ENCODE measurements at regions of chr2 and their contacts with region 1.

Region 1: DNA sequence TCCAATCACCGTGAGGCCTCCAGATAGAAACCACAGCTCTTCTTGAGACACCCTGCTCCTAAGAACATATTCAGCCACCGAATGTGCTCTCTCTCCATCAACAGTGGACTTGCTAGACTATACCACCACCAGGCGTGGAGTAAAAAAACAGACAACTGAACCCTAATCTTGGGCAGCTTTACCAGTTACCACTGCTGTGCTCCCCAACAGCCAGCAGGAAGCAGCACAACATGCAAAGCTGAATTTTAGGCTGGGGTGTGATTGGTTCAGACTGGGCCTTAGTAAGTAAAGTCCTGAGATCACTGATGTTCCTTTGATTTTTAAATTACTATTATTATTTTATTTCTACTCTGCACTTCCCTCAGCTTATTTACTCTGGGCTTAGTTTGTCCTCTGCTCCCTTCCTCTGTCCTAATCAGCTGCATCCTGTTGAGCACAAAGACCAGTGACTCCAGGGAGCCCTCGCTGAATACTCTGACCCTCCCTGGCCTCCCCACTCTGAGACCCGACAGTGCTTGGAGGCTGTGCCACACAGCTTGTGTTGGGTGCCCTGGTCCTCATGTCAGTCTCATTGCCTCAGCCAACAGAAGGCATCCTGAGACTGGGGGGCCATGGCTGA is 21.9 kb downstream of the MRPL35 start:
- DNase-seq: peak; percentile 71
- H3K4me3 Mint-ChIP-seq: no peak overlapping the region
- H3K27ac Mint-ChIP-seq: no peak overlapping the region
- H3K4me1 Mint-ChIP-seq: peaks cover 9% of the 10 kb centered on the region
- H3K27me3 Mint-ChIP-seq: no peaks in the 10 kb centered on the region
- CTCF ChIP-seq: peak; percentile 90

Region 2: GRCh38 chr2:86201671-86202335 is 19.4 kb before region 1 on chr2:
- CTCF ChIA-PET with region 1: interaction called, 15 read pairs
- POLR2A ChIA-PET with region 1: interaction called, 9 read pairs
- intact Hi-C with region 1: no loop called
- DNase-seq: no peak
- H3K4me3 Mint-ChIP-seq: no peak overlapping the region
- H3K27ac Mint-ChIP-seq: no peak overlapping the region
- H3K4me1 Mint-ChIP-seq: peaks cover 16% of the 10 kb centered on the region
- H3K27me3 Mint-ChIP-seq: no peaks in the 10 kb centered on the region
- CTCF ChIP-seq: no peak

Region 3: DNA sequence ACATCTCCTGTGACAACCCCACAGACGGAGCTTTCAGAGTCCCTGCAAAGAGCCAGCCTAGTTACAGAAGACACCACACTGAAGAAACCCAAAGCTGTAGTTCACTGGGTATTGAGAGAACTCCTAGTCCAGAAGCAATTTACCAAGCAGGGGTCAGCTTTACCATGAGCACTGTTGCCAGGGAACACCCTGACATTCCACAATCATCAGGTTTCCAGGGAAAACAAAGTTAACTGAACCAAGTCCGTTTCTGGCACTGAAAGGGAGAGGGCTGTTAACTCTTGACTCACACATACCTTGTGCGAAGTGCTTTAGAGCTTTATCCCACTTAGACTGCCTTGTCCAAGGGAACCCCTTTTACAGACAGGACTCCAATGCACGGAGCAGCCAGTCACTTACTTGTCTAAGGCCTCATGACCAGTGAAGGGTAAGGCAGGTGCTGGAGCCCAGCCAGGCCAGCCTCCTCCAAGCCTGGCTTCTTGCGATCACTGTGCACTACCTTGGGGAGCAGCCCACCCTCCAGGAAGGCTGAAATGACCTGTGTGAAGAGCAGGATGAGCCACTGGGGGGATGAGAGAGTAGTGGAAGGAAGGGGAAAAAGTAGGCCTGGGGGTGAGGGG is 62.3 kb after region 1 on chr2:
- CTCF ChIA-PET with region 1: no interaction called
- POLR2A ChIA-PET with region 1: no interaction called
- intact Hi-C with region 1: no loop called
- DNase-seq: no peak
- H3K4me3 Mint-ChIP-seq: no peak overlapping the region
- H3K27ac Mint-ChIP-seq: no peak overlapping the region
- H3K4me1 Mint-ChIP-seq: no peaks in the 10 kb centered on the region
- H3K27me3 Mint-ChIP-seq: peaks cover 44% of the 10 kb centered on the region
- CTCF ChIP-seq: no peak

Region 4: DNA sequence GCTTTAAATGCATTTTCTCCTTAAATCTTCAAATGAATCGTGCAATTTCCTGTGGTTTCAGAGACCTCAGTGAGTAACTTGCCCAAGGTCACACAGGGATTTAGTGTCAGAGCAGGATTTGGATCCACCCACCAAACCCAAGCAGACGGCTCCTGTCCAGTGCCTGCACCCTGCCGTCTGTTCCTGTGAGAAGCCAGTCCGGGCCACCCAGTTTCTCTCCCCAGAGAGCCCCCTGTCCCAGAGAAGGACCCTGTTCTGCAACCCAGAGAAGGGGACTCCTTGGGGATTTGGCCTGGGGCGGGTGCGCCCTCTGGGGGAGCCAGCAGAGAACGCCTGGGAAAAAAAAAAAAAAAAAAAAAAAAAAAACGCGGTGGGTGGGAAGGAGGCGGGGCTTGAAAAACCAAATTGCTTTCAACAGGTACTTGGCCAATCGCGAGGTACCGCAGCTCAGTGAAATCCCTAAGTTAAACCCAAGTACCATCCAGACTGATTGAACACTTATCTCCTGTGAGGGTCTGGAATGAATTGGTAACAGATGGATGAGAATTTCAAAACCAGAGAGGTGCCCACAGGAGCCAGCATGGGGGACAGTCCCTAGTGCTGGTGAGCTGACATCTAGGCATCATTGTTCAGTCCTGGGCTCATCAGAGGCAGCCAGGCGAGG is 147.1 kb after region 1 on chr2:
- CTCF ChIA-PET with region 1: interaction called, 57 read pairs
- POLR2A ChIA-PET with region 1: interaction called, 3 read pairs
- intact Hi-C with region 1: loop called (anchors 1 kb)
- DNase-seq: peak; percentile 50
- H3K4me3 Mint-ChIP-seq: peak overlapping the region; percentile 12
- H3K27ac Mint-ChIP-seq: no peak overlapping the region
- H3K4me1 Mint-ChIP-seq: no peaks in the 10 kb centered on the region
- H3K27me3 Mint-ChIP-seq: no peaks in the 10 kb centered on the region
- CTCF ChIP-seq: peak; percentile 40

Region 5: DNA sequence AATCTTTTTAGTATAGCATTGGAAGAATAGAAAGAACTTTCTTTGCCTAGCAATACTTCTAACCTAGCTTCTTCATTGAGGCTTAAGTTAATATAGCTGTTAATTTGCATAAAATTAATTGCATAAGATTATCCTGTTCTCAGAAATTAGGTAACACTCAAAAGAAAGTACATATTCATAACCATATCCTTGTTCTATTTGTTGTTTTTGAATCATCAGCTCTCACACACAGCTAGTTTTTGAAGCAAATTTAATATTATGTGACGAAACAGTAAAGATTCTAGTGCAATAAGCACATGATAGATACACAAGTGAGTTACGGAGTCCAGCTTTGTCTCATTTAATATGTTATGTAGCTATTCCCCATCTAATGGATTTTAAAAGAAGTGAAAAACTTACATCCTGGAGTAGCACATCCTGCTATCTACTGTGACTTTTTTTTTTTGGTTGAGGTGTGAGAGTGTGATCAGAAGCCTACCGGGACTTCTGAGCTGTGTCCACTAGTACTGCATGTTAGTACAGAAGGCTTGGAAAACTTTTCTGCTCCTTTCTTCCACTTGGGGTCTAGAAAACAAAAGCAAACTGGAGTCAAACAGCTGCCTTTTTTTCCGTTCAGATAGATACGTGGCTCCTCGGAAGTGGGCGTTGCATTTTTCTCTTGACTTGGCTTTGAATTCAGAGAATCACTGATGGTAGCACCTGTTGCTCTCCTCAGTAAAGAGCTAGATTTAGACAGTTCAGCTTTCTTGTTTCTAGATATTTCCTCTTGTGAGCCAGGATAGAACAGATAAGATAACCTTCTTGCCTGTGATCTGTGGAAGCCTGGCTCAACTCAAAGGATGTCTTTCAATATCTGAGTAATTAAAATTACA is 247.2 kb after region 1 on chr2:
- CTCF ChIA-PET with region 1: interaction called, 14 read pairs
- POLR2A ChIA-PET with region 1: no interaction called
- intact Hi-C with region 1: no loop called
- DNase-seq: no peak
- H3K4me3 Mint-ChIP-seq: no peak overlapping the region
- H3K27ac Mint-ChIP-seq: no peak overlapping the region
- H3K4me1 Mint-ChIP-seq: no peaks in the 10 kb centered on the region
- H3K27me3 Mint-ChIP-seq: no peaks in the 10 kb centered on the region
- CTCF ChIP-seq: no peak

Region 6: GRCh38 chr2:86623651-86624541 is 402.7 kb after region 1 on chr2 and contains the start of gene RNF103:
- CTCF ChIA-PET with region 1: interaction called, 4 read pairs
- POLR2A ChIA-PET with region 1: no interaction called
- intact Hi-C with region 1: loop called (anchors 10 kb)
- DNase-seq: peak; percentile 92
- H3K4me3 Mint-ChIP-seq: peak within 1 kb of the TSS; percentile 95
- H3K27ac Mint-ChIP-seq: peak within 1 kb of the TSS; percentile 98
- H3K4me1 Mint-ChIP-seq: peaks cover 6% of the 10 kb centered on the region
- H3K27me3 Mint-ChIP-seq: no peaks in the 10 kb centered on the region
- CTCF ChIP-seq: no peak
- total RNA-seq, gene RNF103: 12.4 and 18.4 TPM in 2 replicates

Measured in MCF 10A (cell line).